K562 (cell line): ENCODE measurements at regions of chr16 and their contacts with region 1.

Region 1: DNA sequence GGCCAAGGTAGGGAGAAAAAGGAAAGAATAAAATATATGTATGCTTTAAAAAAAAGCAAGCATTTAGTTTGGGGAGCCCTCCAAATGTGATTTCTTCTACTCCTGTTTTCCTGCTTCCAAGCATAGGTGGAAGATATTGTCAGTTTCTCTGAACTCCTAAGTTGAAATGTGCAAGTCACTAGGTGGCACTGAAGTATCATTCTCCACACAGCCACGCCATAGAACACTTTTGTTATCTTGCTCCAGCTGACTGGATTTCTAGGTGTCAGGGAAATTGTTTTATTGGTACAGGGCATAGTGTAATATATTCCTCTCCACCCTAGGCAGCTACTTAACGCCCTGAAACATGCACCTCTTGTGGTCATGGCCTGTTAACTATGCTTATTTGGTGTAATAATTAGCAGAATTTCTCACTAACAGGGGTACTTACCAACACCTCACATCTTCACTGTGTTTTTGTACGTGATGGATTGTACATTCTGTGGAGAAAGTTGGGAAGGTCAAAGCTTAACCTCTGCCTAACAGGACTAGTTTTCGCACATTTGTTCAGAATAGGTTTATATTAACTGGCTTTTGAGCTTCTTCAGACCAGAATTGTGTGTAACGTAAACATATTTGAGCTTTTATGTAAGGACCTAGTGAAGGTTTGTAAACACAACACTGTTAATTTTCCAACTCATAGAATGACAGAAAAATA is 69.3 kb downstream of the FTO start:
- DNase-seq: peak; percentile 8 to 65 (median 28)
- ATAC-seq: peak; percentile 81
- H3K4me3 ChIP-seq: no peak overlapping the region
- H3K27ac ChIP-seq: no peak overlapping the region
- H3K4me1 ChIP-seq: peaks cover 0 to 4% of the 10 kb centered on the region in 2 experiments; a peak in 2 of 5 replicates
- H3K27me3 ChIP-seq: no peaks in the 10 kb centered on the region; a peak in 1 of 5 replicates
- CTCF ChIP-seq: peak; percentile 48 to 76 (median 62)
- EP300 ChIP-seq: no peak
- POLR2A ChIP-seq: no peak
- RAD21 ChIP-seq: peak; percentile 72 to 84

Region 2: GRCh38 chr16:53583401-53583800 is 189.9 kb before region 1 on chr16:
- CTCF ChIA-PET with region 1: no interaction called
- POLR2A ChIA-PET with region 1: no interaction called
- in situ Hi-C with region 1: no loop called
- intact Hi-C with region 1: no loop called
- DNase-seq: no peak
- ATAC-seq: no peak
- H3K4me3 ChIP-seq: no peak overlapping the region
- H3K27ac ChIP-seq: no peak overlapping the region
- H3K4me1 ChIP-seq: peaks cover 0 to 6% of the 10 kb centered on the region in 2 experiments; a peak in 3 of 5 replicates
- H3K27me3 ChIP-seq: peaks cover 0 to 12% of the 10 kb centered on the region in 2 experiments; a peak in 2 of 5 replicates
- CTCF ChIP-seq: no peak
- EP300 ChIP-seq: no peak
- POLR2A ChIP-seq: no peak
- RAD21 ChIP-seq: no peak

Region 3: GRCh38 chr16:53805113-53805512 is 31.8 kb after region 1 on chr16:
- CTCF ChIA-PET with region 1: no interaction called
- POLR2A ChIA-PET with region 1: no interaction called
- in situ Hi-C with region 1: no loop called
- intact Hi-C with region 1: no loop called
- DNase-seq: no peak
- ATAC-seq: no peak
- H3K4me3 ChIP-seq: no peak overlapping the region
- H3K27ac ChIP-seq: no peak overlapping the region
- H3K4me1 ChIP-seq: no peaks in the 10 kb centered on the region; a peak in 1 of 5 replicates
- H3K27me3 ChIP-seq: no peaks in the 10 kb centered on the region
- CTCF ChIP-seq: no peak
- EP300 ChIP-seq: no peak
- POLR2A ChIP-seq: no peak
- RAD21 ChIP-seq: no peak

Region 4: GRCh38 chr16:53892155-53892554 is 118.9 kb after region 1 on chr16:
- CTCF ChIA-PET with region 1: no interaction called
- POLR2A ChIA-PET with region 1: no interaction called
- in situ Hi-C with region 1: no loop called
- intact Hi-C with region 1: loop called (anchors 2 kb)
- DNase-seq: peak; percentile 41 to 66 (median 46)
- ATAC-seq: peak; percentile 86
- H3K4me3 ChIP-seq: no peak overlapping the region
- H3K27ac ChIP-seq: no peak overlapping the region
- H3K4me1 ChIP-seq: no peaks in the 10 kb centered on the region
- H3K27me3 ChIP-seq: no peaks in the 10 kb centered on the region
- CTCF ChIP-seq: peak; percentile 43 to 64 (median 59); a peak in 5 of 6 replicates
- EP300 ChIP-seq: no peak
- POLR2A ChIP-seq: no peak
- RAD21 ChIP-seq: peak; percentile 61 to 69

Region 5: DNA sequence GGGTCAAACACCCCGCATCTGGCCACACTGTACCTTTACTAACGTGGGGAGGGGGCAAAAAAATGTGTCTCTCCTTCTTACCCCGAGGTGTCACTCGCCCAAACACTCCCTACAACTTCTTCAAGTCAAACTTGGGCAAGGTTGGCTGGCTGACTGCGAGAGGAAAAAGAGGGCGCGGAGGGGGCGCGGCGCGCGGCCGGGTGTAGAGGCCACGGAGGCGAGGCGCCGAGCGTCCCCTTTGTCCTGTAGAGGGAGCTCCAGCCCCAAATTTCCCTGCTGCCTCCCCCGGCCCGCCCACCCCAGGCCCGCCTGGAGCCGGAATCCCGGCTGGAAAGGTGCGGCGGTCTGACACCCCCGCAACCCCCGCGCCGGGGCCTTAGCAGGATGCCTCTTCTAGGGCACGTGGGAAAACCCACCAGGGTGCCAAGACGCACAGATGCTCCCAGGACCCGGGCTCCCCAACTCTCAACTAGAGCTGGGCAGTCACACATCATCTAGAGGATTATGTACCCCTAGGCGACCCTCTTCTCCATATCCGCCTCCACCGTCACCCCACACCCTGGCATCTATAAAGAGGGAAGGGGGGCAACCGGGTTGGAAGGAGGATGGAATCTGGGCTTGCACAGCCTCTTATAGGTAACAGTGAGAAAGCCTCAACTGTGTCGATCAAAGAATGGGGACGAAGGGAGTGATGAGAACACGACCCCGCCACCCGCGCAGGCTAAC is 509.1 kb after region 1 on chr16:
- CTCF ChIA-PET with region 1: no interaction called
- POLR2A ChIA-PET with region 1: no interaction called
- in situ Hi-C with region 1: no loop called
- intact Hi-C with region 1: loop called (anchors 10 kb)
- DNase-seq: peak; percentile 51 to 73 (median 70)
- ATAC-seq: peak; percentile 95
- H3K4me3 ChIP-seq: no peak overlapping the region
- H3K27ac ChIP-seq: no peak overlapping the region
- H3K4me1 ChIP-seq: peaks cover 0 to 9% of the 10 kb centered on the region in 2 experiments; a peak in 2 of 5 replicates
- H3K27me3 ChIP-seq: peaks cover 5 to 26% of the 10 kb centered on the region in 2 experiments; a peak in 3 of 5 replicates
- CTCF ChIP-seq: peak; percentile 44 to 57 (median 53); a peak in 3 of 6 replicates
- EP300 ChIP-seq: no peak
- POLR2A ChIP-seq: no peak
- RAD21 ChIP-seq: peak; percentile 10 to 24; a peak in 1 of 4 replicates